Left cardiac atrium (tissue), 4 donors: ENCODE measurements at regions of chr5 and their contacts with region 1.

Region 1: GRCh38 chr5:64207978-64208377 is 42.3 kb downstream of the RNF180 start:
- DNase-seq: no peak
- ATAC-seq: no peak

Region 2: GRCh38 chr5:64040490-64040889 is 167.5 kb before region 1 on chr5:
- intact Hi-C with region 1: no loop called
- DNase-seq: no peak
- ATAC-seq: no peak

Region 3: DNA sequence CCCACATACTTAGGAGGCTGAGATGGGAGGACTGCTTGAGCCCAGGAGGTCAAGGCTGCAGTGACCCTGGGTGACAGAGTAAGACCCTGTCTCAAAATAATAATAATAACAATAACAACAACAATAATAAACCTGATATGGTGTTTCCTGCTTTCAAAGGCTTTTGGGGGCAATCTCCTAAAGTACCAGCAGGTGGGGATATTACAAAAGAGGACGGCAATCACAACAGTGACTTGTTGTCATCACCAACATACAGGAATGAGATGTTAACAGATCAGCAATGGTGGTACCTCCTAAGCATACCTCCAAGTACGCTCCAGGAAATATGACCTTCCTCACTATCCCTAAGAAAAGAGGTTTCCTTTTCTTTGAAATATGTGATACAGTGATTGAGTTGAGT is 133.4 kb before region 1 on chr5:
- intact Hi-C with region 1: loop called in 1 of 2 experiments (anchors 10 kb)
- DNase-seq: no peak
- ATAC-seq: peak in 1 of 2 donors; percentile 45

Region 4: DNA sequence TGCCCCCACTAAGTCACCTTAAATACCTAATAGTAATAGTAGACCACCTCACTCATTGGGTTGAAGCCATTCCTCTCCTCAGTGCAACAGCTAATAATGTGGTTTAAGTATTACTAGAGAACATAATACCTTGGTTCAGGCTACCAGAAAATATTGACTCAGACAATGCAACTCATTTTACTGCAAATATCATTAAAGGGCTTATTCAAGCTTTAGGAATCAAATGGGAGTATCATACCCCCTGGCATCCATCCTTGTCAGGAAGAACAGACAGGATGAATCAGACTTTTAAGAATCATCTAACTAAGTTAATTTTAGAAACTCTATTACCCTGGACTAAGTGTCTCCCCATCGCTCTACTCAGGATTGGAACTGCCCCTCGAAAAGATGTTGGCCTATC is 49.2 kb before region 1 on chr5:
- intact Hi-C with region 1: loop called in 1 of 2 experiments (anchors 10 kb)
- DNase-seq: no peak
- ATAC-seq: no peak